Endothelial cell of umbilical vein (primary cell): ENCODE measurements at regions of chr12 and their contacts with region 1.

Region 1: DNA sequence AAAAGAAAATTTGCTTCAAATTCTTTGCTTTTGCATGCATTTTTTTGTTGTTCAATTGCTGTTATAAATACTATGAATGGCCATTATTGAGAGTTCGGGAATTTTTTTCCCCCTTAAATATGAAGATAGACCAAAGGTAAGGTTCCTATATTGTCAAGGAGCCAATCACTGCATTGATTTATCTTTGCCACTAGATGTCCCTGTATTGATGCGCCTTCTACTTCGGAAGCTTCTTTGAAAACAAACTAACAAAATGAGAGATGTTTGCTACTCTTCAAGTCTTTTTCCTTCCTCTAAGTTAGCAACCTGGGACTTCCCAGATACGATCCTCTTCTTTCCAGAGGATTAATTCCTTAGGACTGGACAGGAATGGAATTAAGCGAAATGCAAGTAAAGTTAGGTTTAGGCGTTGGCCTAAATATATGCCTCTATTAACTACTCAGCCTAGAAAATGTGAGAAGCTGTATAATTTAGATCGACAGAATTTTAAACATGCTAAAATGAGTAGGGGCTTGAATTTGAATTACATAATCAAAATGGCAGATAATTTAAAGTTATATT is 318.1 kb downstream of the AEBP2 start:
- DNase-seq: peak; percentile 64
- H3K4me3 ChIP-seq: no peak overlapping the region
- H3K27ac ChIP-seq: no peak overlapping the region
- H3K4me1 ChIP-seq: peaks cover 3% of the 10 kb centered on the region
- H3K27me3 ChIP-seq: no peaks in the 10 kb centered on the region
- CTCF ChIP-seq: peak; percentile 46 to 56
- POLR2A ChIP-seq: no peak

Region 2: GRCh38 chr12:19120795-19121194 is 636.6 kb before region 1 on chr12:
- CTCF ChIA-PET with region 1: no interaction called
- POLR2A ChIA-PET with region 1: no interaction called
- dilution Hi-C with region 1: no loop called
- intact Hi-C with region 1: no loop called
- DNase-seq: no peak
- H3K4me3 ChIP-seq: no peak overlapping the region
- H3K27ac ChIP-seq: no peak overlapping the region
- H3K4me1 ChIP-seq: peaks cover 3% of the 10 kb centered on the region
- H3K27me3 ChIP-seq: no peaks in the 10 kb centered on the region
- CTCF ChIP-seq: no peak
- POLR2A ChIP-seq: no peak

Region 3: DNA sequence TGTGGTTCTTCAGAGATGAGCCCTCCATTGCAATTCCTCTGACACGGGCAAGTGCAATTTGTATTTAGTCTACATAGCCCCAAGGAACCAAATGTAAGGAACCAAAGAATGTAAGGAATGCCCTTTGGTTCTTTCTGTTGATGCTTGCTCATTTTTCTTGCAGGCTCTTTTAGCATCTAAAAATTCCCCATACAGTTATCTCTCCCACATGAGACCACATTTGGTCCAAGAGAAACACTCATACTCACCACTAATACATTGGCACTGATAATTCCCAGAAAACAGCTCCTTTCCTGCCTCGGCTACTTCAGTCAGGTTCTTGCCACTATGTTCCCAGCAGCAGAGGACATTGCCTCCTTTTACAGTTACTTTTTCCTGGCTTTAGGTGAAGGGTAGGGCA is 14.5 kb after region 1 on chr12:
- CTCF ChIA-PET with region 1: interaction called, 10 read pairs
- POLR2A ChIA-PET with region 1: no interaction called
- dilution Hi-C with region 1: no loop called
- intact Hi-C with region 1: no loop called
- DNase-seq: peak; percentile 43
- H3K4me3 ChIP-seq: no peak overlapping the region
- H3K27ac ChIP-seq: no peak overlapping the region
- H3K4me1 ChIP-seq: no peaks in the 10 kb centered on the region
- H3K27me3 ChIP-seq: no peaks in the 10 kb centered on the region
- CTCF ChIP-seq: no peak
- POLR2A ChIP-seq: no peak

Region 4: DNA sequence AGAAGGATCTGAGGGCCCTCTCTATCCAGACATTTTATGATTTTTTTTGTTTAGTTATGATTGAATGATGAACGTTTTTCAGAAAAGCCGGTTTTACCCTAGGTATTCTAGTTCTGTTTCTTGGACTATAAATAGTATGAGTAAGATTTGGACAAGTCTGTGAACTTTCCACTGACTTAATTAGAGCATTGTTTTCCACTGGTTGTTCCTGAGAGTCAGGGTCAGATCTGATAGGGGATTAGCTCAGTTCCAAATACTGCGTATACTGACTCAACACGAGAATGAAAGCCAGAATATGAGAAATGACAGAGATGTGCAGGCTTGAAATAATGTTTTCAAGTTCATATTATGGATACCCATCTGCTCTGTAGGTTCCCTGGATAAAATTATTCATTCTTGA is 43.5 kb after region 1 on chr12:
- CTCF ChIA-PET with region 1: interaction called, 10 read pairs
- POLR2A ChIA-PET with region 1: no interaction called
- dilution Hi-C with region 1: no loop called
- intact Hi-C with region 1: loop called (anchors 5 kb)
- DNase-seq: peak; percentile 91
- H3K4me3 ChIP-seq: no peak overlapping the region
- H3K27ac ChIP-seq: peak overlapping the region; percentile 71
- H3K4me1 ChIP-seq: peaks cover 25% of the 10 kb centered on the region
- H3K27me3 ChIP-seq: no peaks in the 10 kb centered on the region
- CTCF ChIP-seq: no peak
- POLR2A ChIP-seq: no peak

Region 5: GRCh38 chr12:20220339-20220738 is 462.9 kb after region 1 on chr12:
- CTCF ChIA-PET with region 1: interaction called, 25 read pairs
- POLR2A ChIA-PET with region 1: no interaction called
- dilution Hi-C with region 1: no loop called
- intact Hi-C with region 1: loop called (anchors 5 kb)
- DNase-seq: peak; percentile 61
- H3K4me3 ChIP-seq: no peak overlapping the region
- H3K27ac ChIP-seq: no peak overlapping the region
- H3K4me1 ChIP-seq: no peaks in the 10 kb centered on the region
- H3K27me3 ChIP-seq: no peaks in the 10 kb centered on the region
- CTCF ChIP-seq: peak; percentile 26 to 30
- POLR2A ChIP-seq: no peak

Region 6: DNA sequence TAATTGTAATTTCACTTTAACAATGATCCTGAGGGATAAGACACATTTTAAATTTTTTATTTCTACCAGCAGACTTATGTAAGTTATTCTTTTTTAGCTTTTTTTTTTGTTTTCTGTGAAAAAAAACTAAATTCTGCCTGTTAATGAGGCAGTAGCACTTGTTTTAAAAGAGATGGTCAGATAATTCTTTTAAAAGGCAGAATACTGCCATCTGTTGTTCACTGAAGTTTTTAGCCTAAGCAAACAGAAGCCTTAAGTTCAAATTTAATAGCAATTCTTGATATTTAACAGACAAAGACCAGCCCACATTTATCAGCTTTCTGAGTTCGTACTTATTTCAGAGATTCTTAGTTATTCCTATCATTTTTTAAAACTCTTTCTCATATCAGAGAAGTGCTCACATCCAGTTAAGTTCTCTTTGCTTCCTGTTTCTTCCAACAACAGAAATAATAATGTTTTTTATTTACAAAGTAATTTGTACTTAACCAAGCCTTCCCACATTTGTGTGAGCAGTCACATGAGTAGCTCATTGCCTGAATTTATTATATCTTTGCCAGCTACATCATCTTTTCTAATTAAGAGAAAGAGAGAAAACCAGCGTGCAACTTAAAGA is 844.4 kb after region 1 on chr12:
- CTCF ChIA-PET with region 1: interaction called, 4 read pairs
- POLR2A ChIA-PET with region 1: no interaction called
- dilution Hi-C with region 1: no loop called
- intact Hi-C with region 1: loop called (anchors 5 kb)
- DNase-seq: peak; percentile 75
- H3K4me3 ChIP-seq: no peak overlapping the region
- H3K27ac ChIP-seq: no peak overlapping the region
- H3K4me1 ChIP-seq: peaks cover 9% of the 10 kb centered on the region
- H3K27me3 ChIP-seq: no peaks in the 10 kb centered on the region
- CTCF ChIP-seq: peak in 1 of 2 donors; percentile 24
- POLR2A ChIP-seq: no peak